Activated T-helper 1 cell treated with anti-CD3 and anti-CD28 coated beads, Interleukin-12 subunit alpha, Interleukin-12 subunit beta, Interleukin-2, Interleukin-4 antibody, amounts not matched to agents 30 ng/mL and 10 ng/mL and 1 ng/mL, durations not matched to agents 14 hours and 24 hours and 36 hours (primary cell): ENCODE measurements at regions of chr6 and their contacts with region 1.

Region 1: DNA sequence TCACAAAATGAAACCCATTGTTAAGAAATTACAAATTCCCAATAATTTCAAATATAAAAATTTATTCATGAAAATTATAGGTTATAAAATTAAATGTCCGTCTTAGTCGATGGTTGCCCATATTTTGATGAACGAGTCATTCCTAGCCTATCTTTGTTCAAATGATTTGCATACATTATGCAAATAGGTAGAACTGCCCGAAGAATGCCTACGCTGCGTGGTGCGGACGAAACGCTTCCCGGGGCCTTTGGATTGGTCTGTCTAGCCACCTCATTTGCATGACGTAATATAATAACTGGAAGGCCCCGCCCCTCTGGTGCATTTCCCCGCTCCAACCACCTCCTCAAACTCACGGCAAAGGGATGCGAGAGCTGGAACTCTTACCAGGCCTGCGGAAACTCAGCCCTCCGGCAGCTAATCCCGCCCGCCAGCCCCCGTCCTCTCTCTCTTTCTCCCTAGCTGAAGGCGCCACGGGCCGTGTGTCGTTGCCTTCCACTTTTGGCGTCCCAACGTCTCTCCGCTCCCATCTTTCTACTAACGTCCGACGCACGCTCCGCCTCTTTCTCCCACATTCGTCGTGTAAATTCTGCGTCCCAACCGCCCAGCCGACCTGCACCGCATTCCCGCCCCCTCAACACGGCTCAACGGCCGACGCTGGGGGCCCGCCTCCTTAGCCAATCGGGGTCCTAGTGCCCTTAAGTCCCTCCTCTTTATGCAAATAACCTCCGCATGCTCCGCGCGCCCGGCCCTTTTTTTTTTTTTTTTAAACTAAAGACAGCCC is 520 bp upstream of the PRRC2A start:
- DNase-seq: peak; percentile 98
- H3K4me3 Mint-ChIP-seq: peak overlapping the region; percentile 79
- H3K27ac Mint-ChIP-seq: peak overlapping the region; percentile 98
- H3K4me1 Mint-ChIP-seq: peaks cover 43% of the 10 kb centered on the region
- H3K27me3 Mint-ChIP-seq: no peaks in the 10 kb centered on the region

Region 2: GRCh38 chr6:31271641-31272357 is 348.2 kb before region 1 on chr6 and contains the start of gene HLA-C:
- intact Hi-C with region 1: loop called (anchors 5 kb)
- DNase-seq: peak; percentile 88
- H3K4me3 Mint-ChIP-seq: peak within 1 kb of the TSS; percentile 97
- H3K27ac Mint-ChIP-seq: peak within 1 kb of the TSS; percentile 94
- H3K4me1 Mint-ChIP-seq: peaks cover 53% of the 10 kb centered on the region
- H3K27me3 Mint-ChIP-seq: peaks cover 4% of the 10 kb centered on the region
- total RNA-seq, gene HLA-C: 944 and 984 TPM in 2 replicates

Region 3: GRCh38 chr6:31332637-31333602 is 287.1 kb before region 1 on chr6:
- intact Hi-C with region 1: no loop called
- DNase-seq: no peak
- H3K4me3 Mint-ChIP-seq: peak overlapping the region; percentile 10
- H3K27ac Mint-ChIP-seq: peak overlapping the region; percentile 66
- H3K4me1 Mint-ChIP-seq: peaks cover 18% of the 10 kb centered on the region
- H3K27me3 Mint-ChIP-seq: no peaks in the 10 kb centered on the region

Region 4: DNA sequence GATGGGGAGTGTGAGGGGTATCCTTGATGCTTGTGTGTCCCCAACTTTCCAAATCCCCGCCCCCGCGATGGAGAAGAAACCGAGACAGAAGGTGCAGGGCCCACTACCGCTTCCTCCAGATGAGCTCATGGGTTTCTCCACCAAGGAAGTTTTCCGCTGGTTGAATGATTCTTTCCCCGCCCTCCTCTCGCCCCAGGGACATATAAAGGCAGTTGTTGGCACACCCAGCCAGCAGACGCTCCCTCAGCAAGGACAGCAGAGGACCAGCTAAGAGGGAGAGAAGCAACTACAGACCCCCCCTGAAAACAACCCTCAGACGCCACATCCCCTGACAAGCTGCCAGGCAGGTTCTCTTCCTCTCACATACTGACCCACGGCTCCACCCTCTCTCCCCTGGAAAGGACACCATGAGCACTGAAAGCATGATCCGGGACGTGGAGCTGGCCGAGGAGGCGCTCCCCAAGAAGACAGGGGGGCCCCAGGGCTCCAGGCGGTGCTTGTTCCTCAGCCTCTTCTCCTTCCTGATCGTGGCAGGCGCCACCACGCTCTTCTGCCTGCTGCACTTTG is 44.6 kb before region 1 on chr6 and contains the start of gene TNF:
- intact Hi-C with region 1: loop called (anchors 2 kb)
- DNase-seq: peak; percentile 85
- H3K4me3 Mint-ChIP-seq: peak within 1 kb of the TSS; percentile 92
- H3K27ac Mint-ChIP-seq: peak within 1 kb of the TSS; percentile 81
- H3K4me1 Mint-ChIP-seq: peaks cover 81% of the 10 kb centered on the region
- H3K27me3 Mint-ChIP-seq: peaks cover 2% of the 10 kb centered on the region
- total RNA-seq, gene TNF: 427 and 430 TPM in 2 replicates

Region 5: GRCh38 chr6:31636698-31637596 is 17.0 kb after region 1 on chr6:
- intact Hi-C with region 1: no loop called
- DNase-seq: no peak
- H3K4me3 Mint-ChIP-seq: no peak overlapping the region
- H3K27ac Mint-ChIP-seq: no peak overlapping the region
- H3K4me1 Mint-ChIP-seq: peaks cover 5% of the 10 kb centered on the region
- H3K27me3 Mint-ChIP-seq: no peaks in the 10 kb centered on the region

Region 6: GRCh38 chr6:31665501-31666336 is 45.7 kb after region 1 on chr6 and contains the start of gene CSNK2B:
- intact Hi-C with region 1: loop called (anchors 1 kb)
- DNase-seq: peak; percentile 98
- H3K4me3 Mint-ChIP-seq: peak within 1 kb of the TSS; percentile 98
- H3K27ac Mint-ChIP-seq: peak within 1 kb of the TSS; percentile 90
- H3K4me1 Mint-ChIP-seq: peaks cover 74% of the 10 kb centered on the region
- H3K27me3 Mint-ChIP-seq: no peaks in the 10 kb centered on the region
- total RNA-seq, gene CSNK2B: 302 and 308 TPM in 2 replicates

Region 7: DNA sequence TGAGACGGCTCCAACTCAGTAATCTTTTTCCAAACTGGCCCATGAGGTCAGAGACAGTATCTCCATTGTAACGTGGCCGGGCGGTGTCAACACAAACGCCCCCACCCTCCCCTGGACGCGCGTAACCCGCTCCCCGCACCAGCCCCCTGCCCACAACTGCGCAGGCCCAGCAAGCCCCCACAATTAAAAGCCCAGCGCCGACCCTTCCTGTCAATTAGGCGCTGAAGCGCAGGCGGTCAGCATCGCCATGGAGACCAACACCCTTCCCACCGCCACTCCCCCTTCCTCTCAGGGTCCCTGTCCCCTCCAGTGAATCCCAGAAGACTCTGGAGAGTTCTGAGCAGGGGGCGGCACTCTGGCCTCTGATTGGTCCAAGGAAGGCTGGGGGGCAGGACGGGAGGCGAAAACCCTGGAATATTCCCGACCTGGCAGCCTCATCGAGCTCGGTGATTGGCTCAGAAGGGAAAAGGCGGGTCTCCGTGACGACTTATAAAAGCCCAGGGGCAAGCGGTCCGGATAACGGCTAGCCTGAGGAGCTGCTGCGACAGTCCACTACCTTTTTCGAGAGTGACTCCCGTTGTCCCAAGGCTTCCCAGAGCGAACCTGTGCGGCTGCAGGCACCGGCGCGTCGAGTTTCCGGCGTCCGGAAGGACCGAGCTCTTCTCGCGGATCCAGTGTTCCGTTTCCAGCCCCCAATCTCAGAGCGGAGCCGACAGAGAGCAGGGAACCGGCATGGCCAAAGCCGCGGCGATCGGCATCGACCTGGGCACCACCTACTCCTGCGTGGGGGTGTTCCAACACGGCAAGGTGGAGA is 195.2 kb after region 1 on chr6 and contains the starts of genes HSPA1A and HSPA1L:
- intact Hi-C with region 1: no loop called
- DNase-seq: peak; percentile 75
- H3K4me3 Mint-ChIP-seq: peak within 1 kb of the TSS; percentile 93
- H3K27ac Mint-ChIP-seq: peak within 1 kb of the TSS; percentile 95
- H3K4me1 Mint-ChIP-seq: peaks cover 50% of the 10 kb centered on the region
- H3K27me3 Mint-ChIP-seq: no peaks in the 10 kb centered on the region
- total RNA-seq, gene HSPA1A: 173 and 175 TPM in 2 replicates
- total RNA-seq, gene HSPA1L: 2.2 and 2.9 TPM in 2 replicates

Region 8: DNA sequence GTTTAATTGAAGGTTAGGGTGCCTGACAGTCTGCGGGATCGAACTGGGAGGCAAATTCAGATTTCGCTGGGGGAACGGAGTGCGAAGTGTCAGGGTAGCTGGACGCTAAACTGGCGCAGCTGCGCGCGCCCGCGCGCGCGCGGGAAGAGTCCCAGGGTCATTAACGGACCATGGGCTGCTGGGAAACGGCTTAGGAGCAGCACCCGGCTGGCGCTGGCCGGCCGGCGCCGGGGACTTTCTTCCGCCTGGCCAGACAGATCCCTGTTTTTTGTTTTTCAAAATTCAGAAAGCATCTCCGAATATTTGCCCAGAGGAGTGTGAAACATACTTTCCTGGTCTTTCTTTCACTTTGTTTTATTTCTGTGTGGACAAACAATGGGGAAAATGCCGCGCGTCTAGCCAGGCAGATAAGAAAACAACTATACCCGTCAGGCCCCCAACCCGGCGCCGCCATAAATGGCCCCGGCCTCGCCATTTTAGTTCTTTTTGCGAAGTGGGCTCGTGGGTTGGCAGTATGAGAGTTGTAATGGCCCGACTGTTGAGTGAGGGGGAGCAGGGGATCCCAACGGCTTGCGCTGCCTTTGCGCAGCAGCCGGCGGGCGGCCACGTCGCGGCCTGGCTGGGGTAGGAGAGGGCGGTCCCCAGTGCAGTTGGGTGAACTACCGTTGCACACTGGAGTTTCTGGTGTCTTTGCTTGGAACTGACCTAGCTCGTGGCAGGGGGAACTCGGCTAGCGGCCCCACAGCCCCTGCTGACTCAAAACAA is 214.6 kb after region 1 on chr6:
- intact Hi-C with region 1: loop called (anchors 1 kb)
- DNase-seq: peak; percentile 72
- H3K4me3 Mint-ChIP-seq: peak overlapping the region; percentile 94
- H3K27ac Mint-ChIP-seq: peak overlapping the region; percentile 100
- H3K4me1 Mint-ChIP-seq: peaks cover 49% of the 10 kb centered on the region
- H3K27me3 Mint-ChIP-seq: no peaks in the 10 kb centered on the region

Region 9: DNA sequence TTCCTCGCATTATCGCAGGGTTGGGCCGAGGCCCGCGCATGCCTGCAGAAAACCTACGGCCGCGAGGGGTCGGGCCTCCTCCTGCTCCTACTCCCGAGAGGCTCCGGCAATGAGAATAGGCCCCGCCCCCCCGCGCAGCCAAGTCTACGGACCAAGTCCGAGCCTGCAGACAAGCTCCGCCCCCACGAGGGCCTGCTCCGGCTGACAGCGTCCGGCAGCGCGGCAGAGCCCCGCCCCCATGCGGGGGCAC is 575.6 kb after region 1 on chr6:
- intact Hi-C with region 1: loop called (anchors 2 kb)
- DNase-seq: peak; percentile 100
- H3K4me3 Mint-ChIP-seq: peak overlapping the region; percentile 97
- H3K27ac Mint-ChIP-seq: peak overlapping the region; percentile 98
- H3K4me1 Mint-ChIP-seq: peaks cover 48% of the 10 kb centered on the region
- H3K27me3 Mint-ChIP-seq: peaks cover 2% of the 10 kb centered on the region